CD4-positive, alpha-beta T cell (primary cell): ENCODE measurements at regions of chr19 and their contacts with region 1.

Region 1: DNA sequence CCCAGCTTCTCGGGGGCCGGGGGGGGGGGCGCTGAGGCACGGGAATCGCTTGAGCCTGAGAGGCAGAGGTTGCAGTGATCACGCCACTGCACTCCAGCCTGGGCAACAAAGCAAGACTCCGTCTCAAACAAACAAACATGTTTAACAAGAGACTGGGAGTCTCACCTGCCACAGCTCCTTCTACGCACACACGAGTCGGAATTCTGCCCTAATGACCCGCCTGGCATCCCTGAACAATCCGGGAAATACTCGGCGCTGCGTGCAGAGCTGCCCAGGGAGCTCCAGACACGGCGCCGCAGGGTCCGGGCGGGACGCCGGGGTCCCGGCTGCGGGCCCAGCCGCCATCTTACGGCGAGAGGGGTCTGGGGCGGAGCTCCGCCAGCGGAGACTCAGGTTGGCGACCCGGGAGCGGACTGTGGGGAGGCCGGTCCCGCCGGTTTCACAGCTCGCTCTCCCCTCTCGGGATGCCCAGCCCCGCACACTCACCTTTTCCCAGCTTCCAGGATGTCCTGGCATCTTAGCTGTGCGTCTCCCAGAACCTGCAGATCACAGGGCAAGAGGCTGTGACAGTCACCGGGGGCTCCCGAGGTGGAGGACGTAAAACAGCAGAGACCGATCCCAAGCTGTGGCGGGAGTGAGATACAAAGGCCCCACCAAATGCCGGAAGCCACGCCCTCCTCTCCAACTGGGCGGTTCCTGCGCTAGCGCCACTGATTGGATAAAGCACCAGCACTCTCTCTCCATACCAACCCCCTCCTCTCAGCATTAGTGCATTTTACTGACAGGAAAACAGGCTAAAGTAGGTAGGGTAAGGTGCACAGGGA is 23.6 kb upstream of the ZNF724 start:
- DNase-seq: peak; percentile 80 to 96 (median 90)
- ATAC-seq: peak; percentile 98
- H3K4me3 ChIP-seq: peak overlapping the region; percentile 98
- H3K4me3 Mint-ChIP-seq: peak overlapping the region; percentile 99
- H3K27ac ChIP-seq: peak overlapping the region; percentile 72 to 88
- H3K27ac Mint-ChIP-seq: peak overlapping the region; percentile 97
- H3K4me1 ChIP-seq: peaks cover 11% of the 10 kb centered on the region
- H3K4me1 Mint-ChIP-seq: peaks cover 32% of the 10 kb centered on the region
- H3K27me3 ChIP-seq: no peaks in the 10 kb centered on the region
- H3K27me3 Mint-ChIP-seq: no peaks in the 10 kb centered on the region
- CTCF ChIP-seq: no peak

Region 2: GRCh38 chr19:22634450-22634827 is 639.4 kb before region 1 on chr19:
- CTCF ChIA-PET with region 1: no interaction called
- POLR2A ChIA-PET with region 1: interaction called, 8 read pairs
- intact Hi-C with region 1: loop called in 1 of 2 experiments (anchors 10 kb)
- DNase-seq: no peak
- ATAC-seq: peak; percentile 16
- H3K4me3 ChIP-seq: peak overlapping the region; percentile 65
- H3K4me3 Mint-ChIP-seq: peak overlapping the region; percentile 96
- H3K27ac ChIP-seq: no peak overlapping the region
- H3K27ac Mint-ChIP-seq: peak overlapping the region; percentile 83
- H3K4me1 ChIP-seq: no peaks in the 10 kb centered on the region
- H3K4me1 Mint-ChIP-seq: peaks cover 16% of the 10 kb centered on the region
- H3K27me3 ChIP-seq: peaks cover 0 to 2% of the 10 kb centered on the region in 2 experiments
- H3K27me3 Mint-ChIP-seq: no peaks in the 10 kb centered on the region
- CTCF ChIP-seq: no peak

Region 3: DNA sequence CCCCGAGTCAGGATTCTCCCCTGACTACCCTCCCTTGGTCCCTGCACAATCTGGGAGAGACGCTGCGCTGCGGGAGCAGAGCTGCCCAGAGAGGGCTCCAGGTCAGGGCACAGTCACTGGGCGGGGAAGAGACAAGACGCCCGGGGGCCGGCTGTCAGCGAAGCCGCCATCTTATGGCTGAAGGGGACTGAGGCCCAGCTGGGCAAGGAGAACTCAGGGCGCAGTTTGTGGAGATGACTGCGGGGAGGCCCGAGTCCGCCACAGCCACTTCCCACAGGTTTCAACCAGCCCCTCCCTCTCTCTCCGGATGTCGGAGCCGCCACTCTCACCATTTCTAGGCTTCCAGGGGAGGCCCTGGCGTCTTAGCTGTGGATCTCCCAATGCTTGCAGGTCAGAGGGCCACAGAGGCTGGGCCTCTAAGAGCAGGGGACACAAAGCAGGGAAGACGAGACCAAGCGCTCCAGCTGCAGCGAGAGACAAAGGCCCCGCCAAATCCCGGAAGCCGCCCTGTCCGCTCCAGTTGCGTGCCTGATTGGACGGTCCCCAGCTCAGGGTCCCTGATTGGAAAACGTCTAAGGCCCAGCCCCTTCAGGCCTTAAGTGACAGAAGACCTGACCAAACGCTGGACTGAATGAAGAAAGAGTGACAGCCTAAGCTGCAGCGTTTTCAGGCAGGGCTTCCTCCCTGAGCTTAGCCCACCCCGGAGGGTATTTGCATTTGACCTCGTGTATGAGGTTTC is 23.7 kb before region 1 on chr19 and contains the start of gene ZNF724:
- CTCF ChIA-PET with region 1: no interaction called
- POLR2A ChIA-PET with region 1: interaction called, 68 read pairs
- intact Hi-C with region 1: loop called in 1 of 2 experiments (anchors 1 kb)
- DNase-seq: peak; percentile 78 to 94 (median 82)
- ATAC-seq: peak; percentile 99
- H3K4me3 ChIP-seq: peak within 1 kb of the TSS; percentile 83
- H3K4me3 Mint-ChIP-seq: peak within 1 kb of the TSS; percentile 98
- H3K27ac ChIP-seq: peak within 1 kb of the TSS; percentile 29 to 55
- H3K27ac Mint-ChIP-seq: peak within 1 kb of the TSS; percentile 83
- H3K4me1 ChIP-seq: peaks cover 12% of the 10 kb centered on the region
- H3K4me1 Mint-ChIP-seq: peaks cover 13% of the 10 kb centered on the region
- H3K27me3 ChIP-seq: no peaks in the 10 kb centered on the region
- H3K27me3 Mint-ChIP-seq: no peaks in the 10 kb centered on the region
- CTCF ChIP-seq: no peak
- total RNA-seq, gene ZNF724: 4.2 to 5.5 TPM

Region 4: GRCh38 chr19:23686621-23687423 is 413.0 kb after region 1 on chr19 and contains the start of gene ZNF675:
- CTCF ChIA-PET with region 1: no interaction called
- POLR2A ChIA-PET with region 1: interaction called, 13 read pairs
- intact Hi-C with region 1: loop called in 1 of 2 experiments (anchors 5 kb)
- DNase-seq: peak; percentile 76 to 95 (median 84)
- ATAC-seq: peak; percentile 96
- H3K4me3 ChIP-seq: peak within 1 kb of the TSS; percentile 77
- H3K4me3 Mint-ChIP-seq: peak within 1 kb of the TSS; percentile 100
- H3K27ac ChIP-seq: peak within 1 kb of the TSS; percentile 79 to 82
- H3K27ac Mint-ChIP-seq: peak within 1 kb of the TSS; percentile 99
- H3K4me1 ChIP-seq: peaks cover 19% of the 10 kb centered on the region
- H3K4me1 Mint-ChIP-seq: peaks cover 49% of the 10 kb centered on the region
- H3K27me3 ChIP-seq: no peaks in the 10 kb centered on the region
- H3K27me3 Mint-ChIP-seq: no peaks in the 10 kb centered on the region
- CTCF ChIP-seq: no peak
- total RNA-seq, gene ZNF675: 15.6 to 16.4 TPM

Region 5: DNA sequence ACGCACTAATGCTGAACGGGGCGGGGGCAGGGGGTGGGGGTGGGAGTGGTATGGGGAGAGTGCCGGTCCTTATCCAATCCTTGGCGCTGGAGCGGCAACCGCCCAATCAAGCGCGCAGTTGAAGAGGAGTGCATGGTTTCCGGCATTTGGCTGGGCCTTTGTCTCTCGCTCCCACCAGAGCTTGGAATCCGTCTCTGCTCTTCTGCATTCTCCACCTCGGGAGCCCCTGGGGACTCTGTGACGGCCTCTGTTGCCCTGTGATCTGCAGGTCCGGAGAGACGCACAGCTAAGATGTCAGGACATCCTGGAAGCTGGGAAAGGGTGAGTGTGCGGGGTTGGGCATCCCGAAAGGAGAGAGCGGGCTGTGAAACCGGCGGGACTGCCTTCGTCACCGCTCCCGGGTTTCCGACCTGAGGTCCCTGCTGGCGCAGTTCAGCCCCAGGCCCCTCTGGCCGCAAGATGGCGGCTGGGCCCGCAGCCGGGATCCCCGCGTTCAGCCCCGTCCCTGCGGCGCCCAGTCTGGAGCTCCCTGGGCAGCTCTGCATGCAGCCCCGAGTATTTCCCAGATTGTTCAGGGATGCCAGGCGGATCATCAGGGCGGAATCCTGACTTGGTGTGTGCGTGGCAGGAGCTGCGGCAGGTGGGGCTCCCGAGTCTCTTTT is 759.6 kb after region 1 on chr19:
- CTCF ChIA-PET with region 1: no interaction called
- POLR2A ChIA-PET with region 1: interaction called, 21 read pairs
- intact Hi-C with region 1: loop called in 1 of 2 experiments (anchors 10 kb)
- DNase-seq: peak; percentile 65 to 92 (median 77)
- ATAC-seq: peak; percentile 99
- H3K4me3 ChIP-seq: peak overlapping the region; percentile 99
- H3K4me3 Mint-ChIP-seq: peak overlapping the region; percentile 100
- H3K27ac ChIP-seq: peak overlapping the region; percentile 66 to 85
- H3K27ac Mint-ChIP-seq: peak overlapping the region; percentile 94
- H3K4me1 ChIP-seq: peaks cover 51% of the 10 kb centered on the region
- H3K4me1 Mint-ChIP-seq: peaks cover 47% of the 10 kb centered on the region
- H3K27me3 ChIP-seq: no peaks in the 10 kb centered on the region
- H3K27me3 Mint-ChIP-seq: no peaks in the 10 kb centered on the region
- CTCF ChIP-seq: no peak